ENCODE measurements at regions of chr17 and their contacts with region 1.

Region 1: DNA sequence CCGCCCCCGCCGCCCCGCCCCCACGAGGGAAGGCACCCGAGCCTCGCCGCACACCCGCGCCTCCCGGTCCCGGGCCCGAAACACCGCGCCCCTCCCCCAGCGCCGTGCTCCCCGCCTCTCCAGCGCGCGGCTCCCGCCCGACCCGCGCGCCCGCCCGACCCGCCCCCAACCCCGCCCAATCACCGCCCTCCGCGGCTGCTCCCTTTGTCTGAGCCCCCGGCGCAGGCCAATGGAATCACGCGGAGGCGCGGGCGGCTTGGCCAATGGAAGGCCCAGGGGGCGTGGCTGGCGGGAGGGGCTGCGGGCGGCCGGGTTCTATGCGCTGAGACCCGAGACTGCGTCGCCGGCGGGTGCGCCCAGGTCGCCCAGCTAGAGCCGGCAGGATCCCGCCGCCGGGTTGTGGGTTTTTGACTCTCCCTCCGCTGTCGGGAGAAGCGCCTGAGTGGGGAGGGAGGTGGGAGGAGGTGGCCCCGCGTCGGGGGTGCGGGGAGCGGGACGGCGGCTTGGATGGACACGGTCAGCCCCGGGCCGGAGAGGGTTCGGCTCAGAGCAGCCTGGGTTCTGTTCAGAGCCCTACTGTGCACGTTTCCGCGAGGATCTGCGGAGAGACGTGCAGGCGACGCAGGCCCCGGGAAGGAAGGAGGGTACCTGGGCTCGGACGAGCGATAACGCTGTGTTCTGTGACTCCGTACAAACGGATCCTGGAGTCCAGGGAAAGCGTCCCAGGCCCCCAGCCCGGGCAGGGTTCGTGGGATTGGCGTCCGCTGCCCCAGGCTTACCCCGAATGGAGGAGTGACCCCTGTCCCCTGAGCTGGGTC is 49.0 kb upstream of the BAHCC1 start:
- DNase-seq: peak; percentile 88 to 94 (median 92)
- ATAC-seq: peak; percentile 97
- H3K4me3 ChIP-seq: peak overlapping the region; percentile 44
- H3K4me3 Mint-ChIP-seq: peak overlapping the region; percentile 16 to 74 (median 58)
- H3K27ac ChIP-seq: no peak overlapping the region
- H3K27ac Mint-ChIP-seq: no peak overlapping the region
- H3K4me1 ChIP-seq: peaks cover 17 to 31% of the 10 kb centered on the region in 2 donors
- H3K4me1 Mint-ChIP-seq: peaks cover 10 to 29% (median 16%) of the 10 kb centered on the region in 7 donors
- H3K27me3 ChIP-seq: peaks cover 3 to 32% of the 10 kb centered on the region in 2 donors
- H3K27me3 Mint-ChIP-seq: peaks cover 26 to 57% (median 32%) of the 10 kb centered on the region in 5 donors

Region 2: DNA sequence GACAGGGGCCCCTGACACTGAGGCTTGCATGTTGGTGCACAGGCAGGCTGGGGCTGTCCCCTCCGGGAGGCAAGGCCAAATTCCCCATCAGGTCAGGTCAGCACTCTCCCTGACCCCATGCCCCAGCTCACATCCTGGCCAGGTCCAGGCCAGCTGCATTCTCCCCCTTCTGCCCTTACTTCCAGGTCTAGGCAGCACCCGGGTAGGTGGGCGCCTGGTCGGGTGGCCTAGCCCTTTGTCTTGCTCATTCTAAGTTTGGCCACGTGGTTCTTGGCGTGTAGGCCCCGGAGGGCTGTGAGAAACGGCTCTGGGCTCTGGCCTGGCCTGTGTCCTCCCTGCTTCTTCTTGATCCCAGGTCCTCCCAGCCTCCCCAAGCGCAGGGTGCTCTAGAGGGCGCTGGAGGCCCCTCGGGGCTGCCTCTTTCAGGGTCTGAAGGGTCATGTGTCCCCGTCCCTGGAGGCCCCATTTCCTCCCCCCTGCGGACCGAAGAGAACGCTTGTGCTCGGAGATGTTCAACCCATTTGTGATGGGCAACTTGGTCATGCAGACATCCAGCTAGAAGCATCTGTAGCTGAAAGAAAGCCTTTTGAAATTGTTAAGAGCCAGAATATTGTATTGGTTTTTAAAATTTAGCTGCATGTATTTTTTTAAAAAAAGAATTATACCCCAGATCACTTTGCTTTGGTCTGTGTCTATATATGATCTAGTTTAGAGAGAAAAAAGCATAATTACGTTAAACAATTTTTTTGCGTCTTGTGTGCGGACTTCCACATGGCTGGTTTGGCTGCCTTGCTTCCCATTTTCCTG is 55.6 kb after region 1 on chr17:
- CTCF ChIA-PET with region 1: no interaction called
- POLR2A ChIA-PET with region 1: no interaction called
- intact Hi-C with region 1: loop called in 1 of 2 experiments (anchors 2 kb)
- DNase-seq: no peak
- ATAC-seq: peak; percentile 47
- H3K4me3 ChIP-seq: no peak overlapping the region
- H3K4me3 Mint-ChIP-seq: peak overlapping the region in 3 of 10 donors; percentile 40 to 61 (median 55)
- H3K27ac ChIP-seq: no peak overlapping the region
- H3K27ac Mint-ChIP-seq: peak overlapping the region in 2 of 9 donors; percentile 34 to 60
- H3K4me1 ChIP-seq: peaks cover 21 to 22% of the 10 kb centered on the region in 2 donors
- H3K4me1 Mint-ChIP-seq: peaks cover 4 to 22% (median 14%) of the 10 kb centered on the region in 7 donors
- H3K27me3 ChIP-seq: peaks cover 12 to 40% of the 10 kb centered on the region in 2 donors
- H3K27me3 Mint-ChIP-seq: peaks cover 50 to 79% (median 65%) of the 10 kb centered on the region in 5 donors